ENCODE measurements at regions of chr2 and their contacts with region 1.

Region 1: DNA sequence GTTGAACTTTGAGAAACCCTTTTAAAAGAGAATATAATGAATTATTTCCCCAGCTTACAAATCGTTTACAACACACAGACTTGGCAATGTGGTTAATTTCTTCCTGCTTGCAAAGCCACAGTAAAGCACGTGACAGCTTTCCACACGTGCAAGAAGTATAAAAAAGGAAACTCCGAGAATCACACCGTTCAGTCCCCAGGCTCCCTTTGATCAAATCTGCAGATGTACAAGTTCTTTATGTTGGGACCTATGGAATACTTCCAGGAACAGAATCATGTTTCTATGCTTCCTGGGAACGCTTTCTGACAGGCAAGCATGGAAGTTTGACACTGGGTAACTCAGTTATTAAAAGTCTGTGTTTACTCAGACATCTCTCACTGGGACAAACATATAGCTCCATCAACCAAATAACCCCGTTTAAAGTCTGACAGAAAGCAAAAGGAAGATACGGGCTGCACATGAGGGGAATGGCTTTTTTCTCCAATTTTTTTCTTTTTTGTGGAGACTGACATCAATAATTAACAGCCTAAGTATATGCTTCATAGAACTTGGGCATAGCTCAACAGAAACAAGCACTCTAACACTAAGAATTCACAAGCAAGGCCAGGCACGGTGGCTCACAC is 134.8 kb downstream of the EIPR1 start:
- DNase-seq: peak in 33 of 35 experiments; percentile 16 to 82 (median 41)
- ATAC-seq: peak; percentile 80 to 93 (median 92)
- H3K4me3 ChIP-seq: no peak overlapping the region
- H3K4me3 Mint-ChIP-seq: peak overlapping the region; percentile 15 to 62 (median 53)
- H3K27ac ChIP-seq: peak overlapping the region; percentile 67
- H3K27ac Mint-ChIP-seq: peak overlapping the region; percentile 74 to 84
- H3K4me1 ChIP-seq: peaks cover 28 to 57% of the 10 kb centered on the region in 2 experiments
- H3K4me1 Mint-ChIP-seq: peaks cover 6 to 28% (median 18%) of the 10 kb centered on the region in 3 donors
- H3K27me3 ChIP-seq: no peaks in the 10 kb centered on the region
- H3K27me3 Mint-ChIP-seq: no peaks in the 10 kb centered on the region

Region 2: DNA sequence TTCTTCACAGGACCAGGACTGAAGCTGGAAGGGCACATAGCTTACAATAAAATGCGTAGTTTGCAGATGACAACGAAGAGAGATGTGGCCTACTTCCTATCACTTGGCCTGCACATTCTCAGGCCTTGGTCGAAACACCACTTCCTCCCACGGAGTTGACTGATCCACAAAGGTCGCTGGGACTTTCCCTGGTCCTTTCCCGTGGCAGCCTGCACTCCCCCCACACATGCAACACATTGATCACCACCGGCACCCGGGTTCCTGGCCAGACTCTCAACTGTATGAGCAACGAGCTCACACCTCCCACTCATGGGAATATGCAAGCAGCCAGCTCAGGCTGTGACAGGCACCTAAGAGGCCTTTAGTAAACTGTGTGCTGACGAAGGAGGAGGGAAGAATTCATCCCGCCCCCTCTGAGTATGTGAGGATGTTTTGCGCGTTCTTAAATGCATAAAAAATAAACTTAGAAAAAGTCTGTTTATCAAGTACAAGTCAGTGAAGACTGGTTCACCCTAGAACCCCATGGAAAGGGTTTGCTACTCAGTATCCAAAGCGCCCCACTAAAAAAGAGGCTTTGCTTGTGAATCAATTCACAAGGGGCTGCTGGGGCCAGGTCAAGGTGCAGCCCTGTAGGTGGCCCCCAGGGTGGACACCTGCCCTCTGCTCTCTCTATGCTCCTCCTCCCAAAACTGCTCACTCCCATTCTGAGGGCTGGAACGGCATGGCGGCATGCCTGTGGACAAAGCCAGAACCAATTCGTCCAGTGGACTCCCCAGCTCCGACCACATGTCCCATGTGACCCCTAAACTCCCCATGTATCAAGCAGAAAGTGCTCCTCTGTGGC is 19.6 kb before region 1 on chr2:
- CTCF ChIA-PET with region 1: interaction called, 3 to 4 read pairs
- POLR2A ChIA-PET with region 1: interaction called in 1 of 2 experiments, 11 read pairs
- DNase-seq: peak in 34 of 35 experiments; percentile 27 to 87 (median 60)
- ATAC-seq: peak; percentile 69 to 80 (median 76)
- H3K4me3 ChIP-seq: no peak overlapping the region
- H3K4me3 Mint-ChIP-seq: peak overlapping the region in 1 of 3 donors; percentile 53
- H3K27ac ChIP-seq: peak overlapping the region; percentile 92
- H3K27ac Mint-ChIP-seq: peak overlapping the region; percentile 95 to 97
- H3K4me1 ChIP-seq: peaks cover 9 to 30% of the 10 kb centered on the region in 2 experiments
- H3K4me1 Mint-ChIP-seq: peaks cover 26 to 40% (median 32%) of the 10 kb centered on the region in 3 donors
- H3K27me3 ChIP-seq: no peaks in the 10 kb centered on the region
- H3K27me3 Mint-ChIP-seq: no peaks in the 10 kb centered on the region

Measured in T-cell (primary cell).